ENCODE measurements at regions of chr9 and their contacts with region 1.

Region 1: DNA sequence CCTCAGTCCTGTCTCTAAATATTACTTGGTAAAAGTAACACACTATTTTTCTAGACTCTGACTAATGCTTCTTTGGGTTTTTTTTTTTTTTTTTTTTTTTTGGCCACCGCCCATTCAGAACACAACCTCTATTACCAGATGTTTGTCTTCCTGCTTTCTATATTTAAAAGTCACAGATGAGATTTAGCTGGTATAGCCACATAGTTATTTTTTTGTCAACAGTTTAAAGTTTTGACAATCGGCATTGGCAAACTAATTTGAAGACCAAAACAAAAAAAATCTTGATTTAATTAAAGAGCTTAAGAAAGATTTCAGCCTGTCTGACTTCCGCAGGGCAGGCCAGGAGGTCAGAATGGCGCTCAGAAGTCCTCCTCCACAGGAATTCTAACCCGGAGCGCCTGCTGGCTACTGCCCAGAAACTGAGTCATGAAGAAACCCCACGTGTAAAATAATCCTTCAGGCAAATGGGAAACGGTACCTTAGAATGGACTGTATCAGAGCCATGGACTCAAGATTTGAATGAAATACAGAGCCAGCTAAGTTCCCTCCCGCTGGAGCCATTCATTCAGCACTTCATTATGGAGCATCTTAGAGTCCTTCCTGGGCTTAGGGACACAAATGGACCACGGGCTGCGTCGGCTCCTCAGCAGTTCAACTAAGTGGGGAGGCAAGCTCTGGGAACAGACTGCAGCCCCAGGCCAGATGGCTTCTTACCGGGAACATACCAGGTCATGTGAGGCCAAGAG is 55.6 kb downstream of the PTPDC1 start:
- DNase-seq: peak; percentile 70
- H3K4me3 ChIP-seq: peak overlapping the region; percentile 33
- CTCF ChIP-seq: no peak

Region 2: DNA sequence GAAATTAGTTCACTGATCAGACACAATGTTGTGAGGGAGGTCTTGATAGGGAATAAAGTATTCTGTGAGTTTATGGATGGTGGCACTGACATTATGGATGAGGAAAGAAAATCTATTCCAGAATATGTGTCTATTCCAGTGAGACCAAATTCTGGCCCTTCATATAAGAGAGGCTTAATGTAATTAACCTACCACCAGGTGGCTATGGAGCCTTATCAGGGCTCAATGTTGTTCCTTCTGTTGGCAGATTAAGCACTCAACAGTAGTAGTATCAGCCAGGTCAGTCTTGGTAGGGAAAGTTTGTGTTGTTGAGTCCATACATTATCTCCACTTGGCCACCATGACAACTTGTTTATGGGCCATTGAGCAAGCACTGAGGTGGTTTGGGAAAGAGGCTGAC is 143.0 kb before region 1 on chr9:
- CTCF ChIA-PET with region 1: no interaction called
- POLR2A ChIA-PET with region 1: no interaction called
- DNase-seq: no peak
- H3K4me3 ChIP-seq: no peak overlapping the region
- CTCF ChIP-seq: no peak

Region 3: DNA sequence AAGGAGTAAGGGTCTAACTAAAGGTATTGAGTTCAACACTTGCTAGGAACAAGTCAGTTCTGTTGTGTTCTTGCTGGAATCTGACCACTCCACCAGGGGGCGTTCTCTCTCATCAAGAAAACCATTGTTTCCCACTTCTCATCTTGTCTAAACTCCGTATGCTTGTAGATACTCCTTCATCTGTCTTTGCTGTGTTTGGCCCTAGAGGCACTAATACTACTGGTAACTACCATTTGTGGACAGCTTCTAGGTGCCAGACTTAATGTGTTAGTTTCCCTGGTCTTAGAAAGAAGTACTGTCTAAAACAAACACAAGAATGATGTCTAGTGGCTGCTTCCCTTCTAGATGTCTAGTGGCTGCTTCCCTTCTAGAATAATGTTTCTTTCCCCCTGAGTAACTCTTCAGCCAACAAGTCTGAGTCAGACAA is 74.3 kb before region 1 on chr9:
- CTCF ChIA-PET with region 1: no interaction called
- POLR2A ChIA-PET with region 1: no interaction called
- DNase-seq: no peak
- H3K4me3 ChIP-seq: no peak overlapping the region
- CTCF ChIP-seq: peak; percentile 78

Region 4: DNA sequence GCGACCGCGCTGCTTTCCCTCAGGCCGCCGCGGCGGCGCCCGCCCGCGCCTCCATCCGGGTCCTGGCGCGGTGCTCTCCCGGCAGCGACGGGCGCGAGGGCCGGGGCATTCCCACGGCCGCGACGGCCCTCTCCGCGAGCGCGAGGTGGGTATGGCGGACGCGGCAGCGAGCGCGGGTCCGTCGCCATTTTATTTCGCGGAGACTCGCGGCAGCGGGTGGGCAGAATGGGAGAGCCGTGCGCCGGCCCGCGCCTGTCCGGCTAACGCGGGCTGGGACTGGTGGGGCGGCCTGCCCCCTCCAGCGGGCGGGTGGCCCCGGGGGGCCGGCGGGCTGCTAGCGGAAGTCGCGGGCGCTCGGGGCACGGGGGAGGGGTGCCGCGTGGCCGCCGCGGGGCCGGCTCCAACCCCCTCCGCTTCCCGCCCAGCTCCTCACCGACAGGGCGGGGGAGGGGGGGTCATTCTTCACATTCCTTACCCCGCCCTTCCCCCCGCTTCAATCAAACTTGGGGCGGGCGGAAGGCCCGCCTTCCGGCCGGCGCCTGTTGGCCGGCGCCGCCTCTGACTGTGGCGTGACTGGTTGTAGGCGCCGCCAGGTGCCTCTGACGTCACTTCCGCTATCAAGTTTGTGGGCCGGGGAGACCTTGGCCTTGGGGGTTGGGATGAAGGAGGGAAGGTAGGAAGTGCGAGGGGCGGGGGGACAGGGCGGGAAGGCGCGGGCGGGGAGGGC is 26.6 kb after region 1 on chr9:
- CTCF ChIA-PET with region 1: interaction called, 3 read pairs
- POLR2A ChIA-PET with region 1: interaction called, 14 read pairs
- DNase-seq: peak; percentile 89
- H3K4me3 ChIP-seq: peak overlapping the region; percentile 80
- CTCF ChIP-seq: no peak

Measured in AG04449 (cell line).